HCT116 (cell line): ENCODE measurements at regions of chr1 and their contacts with region 1.

Region 1: GRCh38 chr1:67347688-67348472 is 40.2 kb downstream of the IL12RB2 start:
- DNase-seq: peak; percentile 54
- ATAC-seq: peak; percentile 98
- H3K4me3 ChIP-seq: no peak overlapping the region
- H3K27ac ChIP-seq: no peak overlapping the region
- H3K4me1 ChIP-seq: no peaks in the 10 kb centered on the region
- H3K27me3 ChIP-seq: no peaks in the 10 kb centered on the region
- CTCF ChIP-seq: peak; percentile 81 to 86 (median 82); a peak in 5 of 6 replicates
- POLR2A ChIP-seq: no peak
- RAD21 ChIP-seq: peak; percentile 91

Region 2: DNA sequence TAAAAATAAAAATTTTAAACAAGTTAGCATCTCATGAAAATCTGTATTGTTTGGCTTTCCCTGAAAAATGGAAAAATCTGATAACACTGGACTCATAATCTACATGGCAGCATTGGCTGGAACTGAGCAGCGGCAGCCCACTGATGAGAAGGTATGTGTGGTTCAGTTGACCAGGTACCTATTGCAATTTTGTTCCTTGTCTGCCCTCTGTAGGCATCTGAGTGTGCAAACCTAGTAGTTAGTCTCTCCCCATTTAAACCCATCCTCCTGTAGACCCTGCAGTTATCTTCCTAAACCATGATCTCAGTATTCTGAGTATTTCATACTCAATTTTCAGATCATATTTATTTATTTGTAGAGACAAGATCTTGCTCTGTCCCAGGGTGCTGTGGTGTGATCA is 141.8 kb after region 1 on chr1:
- CTCF ChIA-PET with region 1: interaction called, 24 read pairs
- POLR2A ChIA-PET with region 1: no interaction called
- RAD21 ChIA-PET with region 1: no interaction called
- intact Hi-C with region 1: loop called (anchors 1 kb)
- DNase-seq: peak; percentile 13
- ATAC-seq: peak; percentile 78
- H3K4me3 ChIP-seq: no peak overlapping the region
- H3K27ac ChIP-seq: no peak overlapping the region
- H3K4me1 ChIP-seq: no peaks in the 10 kb centered on the region
- H3K27me3 ChIP-seq: no peaks in the 10 kb centered on the region
- CTCF ChIP-seq: peak; percentile 7 to 49 (median 29); a peak in 2 of 6 replicates
- POLR2A ChIP-seq: no peak
- RAD21 ChIP-seq: peak; percentile 76